ENCODE measurements at regions of chr20 and their contacts with region 1.

Region 1: DNA sequence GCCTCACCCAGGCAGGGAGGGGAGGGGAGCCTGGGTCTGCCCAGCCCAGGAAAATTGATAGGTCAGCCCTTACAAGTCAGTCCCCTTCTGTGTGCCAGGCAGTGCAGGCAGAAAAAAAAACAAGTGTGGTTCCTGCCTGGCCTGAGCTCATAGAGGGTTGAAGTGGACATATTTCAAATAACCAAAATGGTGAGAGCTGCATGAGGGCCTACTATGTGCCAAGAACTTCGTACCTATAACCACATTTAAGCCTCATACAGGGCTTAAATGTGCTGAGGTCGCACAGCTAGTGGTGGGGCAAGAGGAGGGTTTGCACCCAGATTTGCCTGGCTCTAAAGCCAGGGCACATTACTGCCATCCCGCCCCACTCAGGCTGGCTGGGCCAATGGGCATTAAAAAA is 6.9 kb upstream of the NOL4L start:
- DNase-seq: no peak
- ATAC-seq: no peak
- H3K4me3 ChIP-seq: no peak overlapping the region
- H3K27ac ChIP-seq: no peak overlapping the region
- H3K4me1 ChIP-seq: no peaks in the 10 kb centered on the region
- H3K27me3 ChIP-seq: no peaks in the 10 kb centered on the region
- CTCF ChIP-seq: no peak

Region 2: DNA sequence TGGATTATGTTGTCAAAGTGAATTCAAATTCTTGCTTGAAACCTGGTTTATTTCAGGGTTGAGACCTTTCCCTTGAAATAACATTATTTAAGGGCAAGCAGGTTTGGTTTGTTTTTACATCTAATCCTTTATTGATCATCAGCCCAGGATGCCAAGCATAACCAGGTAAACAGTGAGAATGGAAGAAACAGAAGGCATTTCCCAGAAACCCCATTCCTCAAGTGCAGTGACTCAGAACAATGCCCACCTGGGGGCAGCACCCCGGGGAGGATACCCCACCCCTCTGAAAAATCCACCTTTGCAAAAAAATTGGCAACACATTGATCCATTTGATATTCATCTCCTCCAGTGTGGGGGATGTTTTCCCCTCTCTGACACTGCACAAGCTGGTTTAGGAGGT is 351.8 kb before region 1 on chr20:
- CTCF ChIA-PET with region 1: no interaction called
- POLR2A ChIA-PET with region 1: no interaction called
- in situ Hi-C with region 1: no loop called
- intact Hi-C with region 1: no loop called
- DNase-seq: no peak
- ATAC-seq: no peak
- H3K4me3 ChIP-seq: no peak overlapping the region
- H3K27ac ChIP-seq: no peak overlapping the region
- H3K4me1 ChIP-seq: peaks cover 19% of the 10 kb centered on the region
- H3K27me3 ChIP-seq: no peaks in the 10 kb centered on the region
- CTCF ChIP-seq: no peak

Region 3: GRCh38 chr20:32470940-32471339 is 121.1 kb before region 1 on chr20:
- CTCF ChIA-PET with region 1: no interaction called
- POLR2A ChIA-PET with region 1: interaction called, 10 read pairs
- in situ Hi-C with region 1: no loop called
- intact Hi-C with region 1: no loop called
- DNase-seq: no peak
- ATAC-seq: no peak
- H3K4me3 ChIP-seq: no peak overlapping the region
- H3K27ac ChIP-seq: no peak overlapping the region
- H3K4me1 ChIP-seq: peaks cover 22% of the 10 kb centered on the region
- H3K27me3 ChIP-seq: no peaks in the 10 kb centered on the region
- CTCF ChIP-seq: no peak

Region 4: GRCh38 chr20:32752458-32753250 is 160.6 kb after region 1 on chr20:
- CTCF ChIA-PET with region 1: no interaction called
- POLR2A ChIA-PET with region 1: no interaction called
- in situ Hi-C with region 1: no loop called
- intact Hi-C with region 1: no loop called
- DNase-seq: no peak
- ATAC-seq: no peak
- H3K4me3 ChIP-seq: no peak overlapping the region
- H3K27ac ChIP-seq: no peak overlapping the region
- H3K4me1 ChIP-seq: no peaks in the 10 kb centered on the region
- H3K27me3 ChIP-seq: no peaks in the 10 kb centered on the region
- CTCF ChIP-seq: no peak

Measured in Panc1 (cell line).